ENCODE measurements at regions of chr22 and their contacts with region 1.

Region 1: GRCh38 chr22:20418211-20418788 is 19.3 kb downstream of the SCARF2 start:
- DNase-seq: peak; percentile 86 to 90 (median 89)
- H3K4me3 ChIP-seq: peak overlapping the region; percentile 21
- H3K27ac ChIP-seq: no peak overlapping the region
- H3K4me1 ChIP-seq: peaks cover 7% of the 10 kb centered on the region
- H3K27me3 ChIP-seq: no peaks in the 10 kb centered on the region
- CTCF ChIP-seq: peak; percentile 77 to 85 (median 84)
- EP300 ChIP-seq: no peak
- POLR2A ChIP-seq: no peak

Region 2: DNA sequence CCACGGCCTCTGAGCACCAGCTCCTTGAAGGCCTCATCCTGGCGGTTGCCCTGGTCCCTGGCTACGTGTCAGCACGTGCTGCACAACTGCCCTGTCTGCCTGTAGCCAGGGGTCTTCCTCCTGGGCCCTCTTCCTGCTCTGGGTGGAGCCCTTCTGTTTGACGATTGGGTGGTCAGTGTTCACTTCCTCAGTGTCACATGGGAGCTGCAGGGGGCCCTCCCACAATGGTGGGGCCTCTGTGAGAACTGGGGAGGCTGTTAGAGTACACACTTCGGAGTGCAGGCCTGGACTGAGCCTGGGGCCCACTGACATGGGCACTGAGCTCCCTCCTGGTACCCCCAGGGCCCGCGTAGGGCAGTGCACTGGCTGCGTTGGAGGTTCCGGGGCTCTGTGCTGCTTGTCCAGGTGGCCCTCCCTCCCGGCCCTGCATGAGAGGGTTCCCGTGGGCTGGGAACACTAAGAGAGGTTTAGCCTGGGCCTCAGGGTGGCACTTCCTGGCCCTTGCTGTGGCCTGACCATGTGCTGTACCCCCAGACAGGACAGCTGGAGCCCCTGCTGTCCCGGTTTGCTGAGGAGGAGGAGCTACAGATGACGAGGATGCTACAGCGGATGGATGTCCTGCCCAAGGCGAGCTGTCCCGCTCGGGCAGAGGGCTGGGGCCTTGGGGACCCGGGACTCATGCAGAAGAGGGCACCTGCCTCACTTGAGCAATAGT is 112.2 kb before region 1 on chr22:
- intact Hi-C with region 1: no loop called
- DNase-seq: no peak
- H3K4me3 ChIP-seq: no peak overlapping the region
- H3K27ac ChIP-seq: no peak overlapping the region
- H3K4me1 ChIP-seq: no peaks in the 10 kb centered on the region
- H3K27me3 ChIP-seq: no peaks in the 10 kb centered on the region
- CTCF ChIP-seq: no peak
- EP300 ChIP-seq: no peak
- POLR2A ChIP-seq: no peak

Region 3: GRCh38 chr22:20354238-20354975 is 63.9 kb before region 1 on chr22:
- intact Hi-C with region 1: no loop called
- DNase-seq: no peak
- H3K4me3 ChIP-seq: no peak overlapping the region
- H3K27ac ChIP-seq: no peak overlapping the region
- H3K4me1 ChIP-seq: no peaks in the 10 kb centered on the region
- H3K27me3 ChIP-seq: no peaks in the 10 kb centered on the region
- CTCF ChIP-seq: no peak
- EP300 ChIP-seq: no peak
- POLR2A ChIP-seq: no peak

Region 4: GRCh38 chr22:20437613-20438426 is 19.5 kb after region 1 on chr22 and contains the start of gene SCARF2:
- intact Hi-C with region 1: loop called in 1 of 4 experiments (anchors 2 kb)
- DNase-seq: peak; percentile 78 to 89 (median 81)
- H3K4me3 ChIP-seq: peak within 1 kb of the TSS; percentile 81
- H3K27ac ChIP-seq: peak within 1 kb of the TSS; percentile 91 to 93
- H3K4me1 ChIP-seq: peaks cover 15% of the 10 kb centered on the region
- H3K27me3 ChIP-seq: no peaks in the 10 kb centered on the region
- CTCF ChIP-seq: no peak
- EP300 ChIP-seq: no peak
- POLR2A ChIP-seq: peak; percentile 13
- total RNA-seq, gene SCARF2: 16.5 to 44.6 (median 30.0) TPM

Region 5: GRCh38 chr22:20456064-20456721 is 37.9 kb after region 1 on chr22:
- intact Hi-C with region 1: loop called (anchors 1 to 5 kb)
- DNase-seq: peak; percentile 75 to 80 (median 76)
- H3K4me3 ChIP-seq: no peak overlapping the region
- H3K27ac ChIP-seq: no peak overlapping the region
- H3K4me1 ChIP-seq: peaks cover 4% of the 10 kb centered on the region
- H3K27me3 ChIP-seq: no peaks in the 10 kb centered on the region
- CTCF ChIP-seq: peak; percentile 61 to 77 (median 72)
- EP300 ChIP-seq: no peak
- POLR2A ChIP-seq: no peak

Region 6: GRCh38 chr22:20495861-20496681 is 77.8 kb after region 1 on chr22:
- intact Hi-C with region 1: loop called (anchors 5 kb)
- DNase-seq: peak; percentile 90 to 94 (median 92)
- H3K4me3 ChIP-seq: peak overlapping the region; percentile 52
- H3K27ac ChIP-seq: peak overlapping the region; percentile 77 to 99
- H3K4me1 ChIP-seq: no peaks in the 10 kb centered on the region
- H3K27me3 ChIP-seq: no peaks in the 10 kb centered on the region
- CTCF ChIP-seq: peak; percentile 83 to 94 (median 90)
- EP300 ChIP-seq: no peak
- POLR2A ChIP-seq: peak; percentile 51

Region 7: GRCh38 chr22:20568989-20569769 is 150.9 kb after region 1 on chr22:
- intact Hi-C with region 1: loop called in 2 of 4 experiments (anchors 10 kb)
- DNase-seq: peak in 4 of 5 donors; percentile 57 to 77 (median 64)
- H3K4me3 ChIP-seq: no peak overlapping the region
- H3K27ac ChIP-seq: peak overlapping the region in 1 of 2 donors; percentile 25
- H3K4me1 ChIP-seq: peaks cover 19% of the 10 kb centered on the region
- H3K27me3 ChIP-seq: no peaks in the 10 kb centered on the region
- CTCF ChIP-seq: no peak
- EP300 ChIP-seq: no peak
- POLR2A ChIP-seq: no peak